ENCODE measurements at regions of chr5 and their contacts with region 1.

Region 1: DNA sequence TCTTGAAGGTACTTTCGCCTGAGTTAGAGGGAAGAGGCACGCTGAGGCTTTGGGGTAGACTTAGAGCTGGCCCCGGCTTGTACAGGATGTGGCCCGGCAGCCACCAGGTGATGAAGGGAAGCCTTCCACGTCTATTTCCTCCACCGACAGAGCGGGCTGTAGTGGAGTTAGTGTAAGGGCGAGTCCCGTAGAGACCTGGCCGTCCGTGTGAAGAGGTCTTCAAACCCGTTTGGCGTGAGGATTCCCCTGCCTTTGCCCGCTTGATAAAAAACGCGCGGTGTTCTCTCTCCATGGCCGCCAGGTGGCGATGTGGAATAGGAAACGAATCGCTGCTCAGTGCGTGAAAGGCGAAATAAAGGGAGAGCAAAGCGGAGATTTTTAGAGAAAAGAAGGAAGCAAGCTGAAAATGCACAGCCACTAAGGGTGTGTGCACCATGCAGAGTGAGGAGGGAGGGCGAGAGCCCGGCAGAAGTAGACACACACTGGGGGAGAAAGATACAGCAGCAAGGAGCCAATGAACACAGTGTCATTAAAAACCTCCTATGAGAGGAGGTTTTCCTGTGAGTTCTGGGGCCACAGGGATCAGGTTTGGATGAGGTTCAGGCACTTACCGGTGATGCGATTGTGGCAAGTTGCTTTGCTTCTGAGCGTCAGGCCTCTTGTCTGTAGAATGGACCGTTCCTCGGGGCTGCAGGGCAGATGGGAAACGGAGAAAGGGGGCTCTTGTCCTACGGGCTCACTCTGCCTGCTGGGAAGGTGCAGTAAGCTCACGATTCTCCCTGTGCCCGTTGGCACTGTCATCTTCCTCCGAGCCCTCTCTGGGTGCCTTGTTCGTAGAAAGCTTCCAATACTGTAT is 34.2 kb downstream of the STC2 start:
- DNase-seq: peak; percentile 84
- H3K4me3 Mint-ChIP-seq: no peak overlapping the region
- H3K27ac Mint-ChIP-seq: no peak overlapping the region
- H3K4me1 Mint-ChIP-seq: peaks cover 11% of the 10 kb centered on the region
- H3K27me3 Mint-ChIP-seq: peaks cover 40% of the 10 kb centered on the region

Region 2: DNA sequence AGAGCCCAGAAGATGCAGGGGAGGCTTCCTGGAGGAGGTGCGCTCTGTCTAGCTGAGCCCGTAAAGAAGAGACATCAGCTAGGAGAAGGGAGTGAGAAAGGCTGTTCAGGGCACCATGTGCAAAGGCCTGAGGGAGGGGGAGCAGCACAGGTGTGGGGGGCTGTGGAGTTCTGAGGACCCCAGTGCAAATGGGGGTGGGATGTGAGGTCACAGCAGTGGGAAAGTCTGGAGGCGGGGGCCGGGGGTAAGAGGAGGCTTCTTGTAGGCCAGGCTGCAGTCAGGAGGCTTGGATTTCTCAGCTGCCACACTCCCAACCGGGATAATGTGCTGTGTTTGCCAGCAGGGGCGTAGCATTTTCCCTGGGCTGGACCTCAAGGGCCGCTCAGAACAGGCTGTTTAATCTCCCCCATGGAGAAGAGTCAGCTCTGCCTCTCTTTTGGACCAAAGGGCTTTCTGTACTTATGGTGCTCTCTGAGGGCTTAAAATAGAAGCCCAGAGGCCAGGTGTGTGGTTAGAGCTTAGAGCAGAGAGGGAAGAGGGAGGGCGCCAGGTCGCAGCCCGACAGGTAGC is 647.2 kb before region 1 on chr5:
- CTCF ChIA-PET with region 1: no interaction called
- intact Hi-C with region 1: no loop called
- DNase-seq: no peak
- H3K4me3 Mint-ChIP-seq: no peak overlapping the region
- H3K27ac Mint-ChIP-seq: no peak overlapping the region
- H3K4me1 Mint-ChIP-seq: no peaks in the 10 kb centered on the region
- H3K27me3 Mint-ChIP-seq: peaks cover 16% of the 10 kb centered on the region

Region 3: GRCh38 chr5:173320259-173320658 is 26.2 kb after region 1 on chr5:
- CTCF ChIA-PET with region 1: interaction called, 11 read pairs
- intact Hi-C with region 1: no loop called
- DNase-seq: no peak
- H3K4me3 Mint-ChIP-seq: no peak overlapping the region
- H3K27ac Mint-ChIP-seq: no peak overlapping the region
- H3K4me1 Mint-ChIP-seq: peaks cover 15% of the 10 kb centered on the region
- H3K27me3 Mint-ChIP-seq: peaks cover 29% of the 10 kb centered on the region

Region 4: GRCh38 chr5:173573126-173573960 is 279.3 kb after region 1 on chr5:
- CTCF ChIA-PET with region 1: interaction called, 26 read pairs
- intact Hi-C with region 1: loop called (anchors 1 kb)
- DNase-seq: peak; percentile 70
- H3K4me3 Mint-ChIP-seq: no peak overlapping the region
- H3K27ac Mint-ChIP-seq: no peak overlapping the region
- H3K4me1 Mint-ChIP-seq: peaks cover 6% of the 10 kb centered on the region
- H3K27me3 Mint-ChIP-seq: peaks cover 13% of the 10 kb centered on the region

Measured in activated naive CD4-positive, alpha-beta T cell treated with anti-CD3 and anti-CD28 coated beads for 36 hours (primary cell).